ENCODE measurements at regions of chr1 and their contacts with region 1.

Region 1: GRCh38 chr1:182484591-182485257 is 34.8 kb downstream of the RGSL1 start:
- DNase-seq: peak; percentile 51
- ATAC-seq: peak; percentile 99
- H3K4me3 Mint-ChIP-seq: peak overlapping the region; percentile 12
- H3K27ac Mint-ChIP-seq: peak overlapping the region; percentile 7
- H3K4me1 Mint-ChIP-seq: peaks cover 40% of the 10 kb centered on the region
- H3K27me3 Mint-ChIP-seq: no peaks in the 10 kb centered on the region
- CTCF ChIP-seq: no peak

Region 2: DNA sequence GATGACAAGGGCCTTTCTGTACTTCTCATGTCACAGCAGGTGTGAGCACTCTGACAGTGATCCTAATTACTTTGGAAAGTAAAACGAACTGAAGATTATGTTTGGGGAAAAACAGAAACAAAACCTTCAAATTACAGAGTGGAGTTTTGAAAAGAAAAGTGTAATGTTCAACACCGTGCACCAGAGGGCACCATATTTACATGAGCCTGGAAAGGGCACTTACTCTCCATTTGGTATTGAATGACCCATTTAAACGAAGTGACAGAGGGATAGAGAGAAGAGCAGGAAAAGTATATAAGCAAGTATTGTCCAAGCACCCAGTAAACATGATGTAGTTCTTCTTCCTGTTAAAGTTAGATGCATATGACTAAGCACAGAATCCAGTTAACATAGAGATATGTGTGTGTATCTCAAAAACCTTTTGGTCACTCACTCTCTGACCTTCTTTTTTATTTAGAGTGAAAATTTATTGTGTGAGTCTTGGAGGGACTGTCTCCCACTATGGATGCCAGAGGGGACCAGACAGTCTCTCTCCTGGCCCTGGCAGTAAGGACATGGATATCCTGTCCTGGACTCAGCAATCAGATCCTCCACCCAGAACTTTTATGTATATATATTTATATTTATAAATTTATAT is 38.6 kb before region 1 on chr1:
- CTCF ChIA-PET with region 1: no interaction called
- POLR2A ChIA-PET with region 1: no interaction called
- intact Hi-C with region 1: loop called (anchors 1 kb)
- DNase-seq: no peak
- ATAC-seq: peak; percentile 81
- H3K4me3 Mint-ChIP-seq: no peak overlapping the region
- H3K27ac Mint-ChIP-seq: no peak overlapping the region
- H3K4me1 Mint-ChIP-seq: peaks cover 4% of the 10 kb centered on the region
- H3K27me3 Mint-ChIP-seq: no peaks in the 10 kb centered on the region
- CTCF ChIP-seq: peak; percentile 58

Region 3: DNA sequence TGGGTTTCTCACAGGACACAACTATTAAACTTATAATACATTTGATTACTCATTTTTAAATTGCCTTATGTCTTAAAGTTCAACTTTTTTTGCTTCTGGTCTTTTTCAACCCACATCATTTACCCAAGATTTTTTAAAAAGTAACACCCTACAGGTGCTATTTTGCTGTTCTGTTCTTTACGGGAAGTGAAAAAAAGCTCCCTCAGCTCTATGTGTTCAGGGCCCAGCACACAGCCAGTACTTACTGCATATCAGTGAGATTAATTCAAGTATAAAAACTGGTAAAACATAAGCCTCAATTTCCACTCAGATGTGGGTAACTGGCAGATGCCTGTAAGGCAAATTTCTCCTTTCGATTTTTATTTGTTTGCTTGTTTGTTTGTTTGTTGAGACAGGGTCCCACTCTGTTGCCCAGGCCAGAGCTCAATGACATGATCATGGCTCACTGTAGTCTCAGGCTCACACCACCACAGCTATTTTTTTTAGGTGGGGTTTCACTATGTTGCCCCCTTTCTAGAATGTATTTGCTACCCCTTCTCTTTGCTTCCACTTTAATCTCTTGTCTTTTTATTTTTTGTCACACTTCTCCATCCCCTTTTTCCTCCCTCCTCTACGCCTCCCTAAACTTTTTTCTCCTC is 84.0 kb after region 1 on chr1:
- CTCF ChIA-PET with region 1: interaction called, 7 read pairs
- POLR2A ChIA-PET with region 1: interaction called, 14 read pairs
- intact Hi-C with region 1: loop called (anchors 1 kb)
- DNase-seq: no peak
- ATAC-seq: peak; percentile 65
- H3K4me3 Mint-ChIP-seq: no peak overlapping the region
- H3K27ac Mint-ChIP-seq: no peak overlapping the region
- H3K4me1 Mint-ChIP-seq: peaks cover 21% of the 10 kb centered on the region
- H3K27me3 Mint-ChIP-seq: no peaks in the 10 kb centered on the region
- CTCF ChIP-seq: no peak

Region 4: GRCh38 chr1:182588500-182589452 is 104.1 kb after region 1 on chr1 and contains the start of gene RNASEL:
- CTCF ChIA-PET with region 1: interaction called, 34 read pairs
- POLR2A ChIA-PET with region 1: interaction called, 8 read pairs
- intact Hi-C with region 1: loop called (anchors 2 kb)
- DNase-seq: peak; percentile 39
- ATAC-seq: peak; percentile 90
- H3K4me3 Mint-ChIP-seq: peak within 1 kb of the TSS; percentile 92
- H3K27ac Mint-ChIP-seq: peak within 1 kb of the TSS; percentile 96
- H3K4me1 Mint-ChIP-seq: peaks cover 52% of the 10 kb centered on the region
- H3K27me3 Mint-ChIP-seq: no peaks in the 10 kb centered on the region
- CTCF ChIP-seq: no peak
- total RNA-seq, gene RNASEL: 10.0 and 11.1 TPM in 2 replicates

Region 5: DNA sequence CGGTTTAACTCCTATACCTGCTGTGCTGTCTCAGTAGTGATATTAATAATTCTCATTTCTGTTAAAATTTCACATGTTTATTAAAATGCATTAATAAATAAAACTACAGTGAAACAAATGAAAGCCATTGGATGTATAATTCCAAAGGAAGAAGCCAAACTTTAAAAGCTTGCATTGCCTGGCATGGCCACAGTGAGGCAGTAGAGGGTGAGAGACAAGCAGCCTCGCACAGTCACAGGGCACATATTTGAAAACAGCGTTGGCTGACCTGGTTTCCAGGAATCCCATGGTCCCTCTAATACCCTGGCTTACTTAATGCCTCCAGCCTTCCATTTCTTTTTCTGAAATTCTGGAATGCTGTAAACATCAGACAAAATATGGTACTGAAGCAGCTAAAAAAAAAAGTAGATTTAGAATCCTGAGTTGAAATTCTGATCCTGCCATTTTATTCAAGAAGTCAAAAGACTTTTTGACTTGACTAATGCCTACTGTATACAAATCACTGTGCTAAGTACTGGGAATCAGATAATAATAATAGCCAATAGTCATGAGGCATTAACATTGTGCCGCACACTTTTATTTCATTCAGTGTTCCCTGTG is 111.0 kb after region 1 on chr1:
- CTCF ChIA-PET with region 1: interaction called, 34 read pairs
- POLR2A ChIA-PET with region 1: no interaction called
- intact Hi-C with region 1: loop called (anchors 1 kb)
- DNase-seq: peak; percentile 33
- ATAC-seq: peak; percentile 90
- H3K4me3 Mint-ChIP-seq: no peak overlapping the region
- H3K27ac Mint-ChIP-seq: no peak overlapping the region
- H3K4me1 Mint-ChIP-seq: no peaks in the 10 kb centered on the region
- H3K27me3 Mint-ChIP-seq: no peaks in the 10 kb centered on the region
- CTCF ChIP-seq: peak; percentile 72

Region 6: GRCh38 chr1:182781841-182782586 is 297.3 kb after region 1 on chr1:
- CTCF ChIA-PET with region 1: interaction called, 5 read pairs
- POLR2A ChIA-PET with region 1: no interaction called
- intact Hi-C with region 1: loop called (anchors 1 kb)
- DNase-seq: peak; percentile 54
- ATAC-seq: peak; percentile 88
- H3K4me3 Mint-ChIP-seq: no peak overlapping the region
- H3K27ac Mint-ChIP-seq: no peak overlapping the region
- H3K4me1 Mint-ChIP-seq: peaks cover 10% of the 10 kb centered on the region
- H3K27me3 Mint-ChIP-seq: no peaks in the 10 kb centered on the region
- CTCF ChIP-seq: peak; percentile 53

Region 7: DNA sequence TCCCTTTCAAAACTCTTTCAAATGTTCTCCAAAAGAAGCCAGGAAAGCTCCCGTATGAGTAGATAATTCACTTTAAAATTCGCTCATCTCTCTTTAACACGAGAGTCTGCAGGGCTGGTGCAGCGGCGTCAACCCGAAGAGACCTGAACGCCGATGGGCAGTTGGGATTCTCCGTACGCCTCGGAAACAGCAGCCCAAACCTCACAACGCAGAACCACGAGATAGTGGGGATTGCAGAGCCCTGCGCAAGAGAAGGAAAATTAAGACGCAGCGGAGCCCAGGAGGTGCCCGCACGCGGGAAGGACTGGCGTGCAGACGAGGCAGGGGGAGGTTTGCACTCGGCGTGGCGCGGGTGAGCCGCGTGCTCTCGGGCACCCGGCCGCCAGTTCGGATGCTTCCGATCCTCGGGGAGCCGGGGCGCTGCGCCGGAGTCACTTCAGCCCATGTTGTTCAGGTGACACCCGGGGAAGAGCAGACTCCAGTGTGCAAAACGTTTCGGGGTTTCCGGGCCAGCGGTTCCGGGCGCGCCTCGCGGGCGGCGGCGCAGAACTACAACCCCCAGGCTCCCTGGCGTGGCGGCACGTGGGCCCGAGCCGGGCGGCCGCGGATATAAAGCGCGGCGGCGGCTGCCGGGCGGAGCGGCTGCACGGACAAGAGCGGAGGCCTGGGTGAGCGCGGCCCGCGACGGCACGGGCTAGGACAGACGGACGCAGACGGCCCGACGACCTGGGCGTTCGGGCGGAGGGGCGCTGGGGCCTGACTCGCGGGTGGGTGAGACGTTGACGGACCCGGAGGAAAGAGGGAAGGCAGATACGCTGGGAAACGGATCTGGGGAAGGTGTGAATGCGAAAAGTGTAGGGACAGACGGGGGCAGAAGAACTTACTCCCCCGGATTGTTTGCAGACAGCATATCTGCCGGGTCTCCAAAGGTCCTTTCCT is 304.7 kb after region 1 on chr1 and contains the start of gene NPL:
- CTCF ChIA-PET with region 1: interaction called, 5 read pairs
- POLR2A ChIA-PET with region 1: no interaction called
- intact Hi-C with region 1: loop called (anchors 1 kb)
- DNase-seq: peak; percentile 78
- ATAC-seq: peak; percentile 94
- H3K4me3 Mint-ChIP-seq: peak within 1 kb of the TSS; percentile 93
- H3K27ac Mint-ChIP-seq: peak within 1 kb of the TSS; percentile 80
- H3K4me1 Mint-ChIP-seq: peaks cover 17% of the 10 kb centered on the region
- H3K27me3 Mint-ChIP-seq: peaks cover 3% of the 10 kb centered on the region
- CTCF ChIP-seq: no peak
- total RNA-seq, gene NPL: 1.9 and 2.9 TPM in 2 replicates

Measured in activated B cell treated with CpG ODN at 0.5 μM for 24 hours (primary cell).